ENCODE measurements at regions of chr5 and their contacts with region 1.

Region 1: GRCh38 chr5:128905571-128906110 is 59.6 kb upstream of the SLC27A6 start:
- DNase-seq: peak; percentile 67
- H3K4me3 ChIP-seq: no peak overlapping the region
- H3K27ac ChIP-seq: no peak overlapping the region
- H3K4me1 ChIP-seq: no peaks in the 10 kb centered on the region
- H3K27me3 ChIP-seq: peaks cover 4% of the 10 kb centered on the region
- CTCF ChIP-seq: peak; percentile 82

Region 2: DNA sequence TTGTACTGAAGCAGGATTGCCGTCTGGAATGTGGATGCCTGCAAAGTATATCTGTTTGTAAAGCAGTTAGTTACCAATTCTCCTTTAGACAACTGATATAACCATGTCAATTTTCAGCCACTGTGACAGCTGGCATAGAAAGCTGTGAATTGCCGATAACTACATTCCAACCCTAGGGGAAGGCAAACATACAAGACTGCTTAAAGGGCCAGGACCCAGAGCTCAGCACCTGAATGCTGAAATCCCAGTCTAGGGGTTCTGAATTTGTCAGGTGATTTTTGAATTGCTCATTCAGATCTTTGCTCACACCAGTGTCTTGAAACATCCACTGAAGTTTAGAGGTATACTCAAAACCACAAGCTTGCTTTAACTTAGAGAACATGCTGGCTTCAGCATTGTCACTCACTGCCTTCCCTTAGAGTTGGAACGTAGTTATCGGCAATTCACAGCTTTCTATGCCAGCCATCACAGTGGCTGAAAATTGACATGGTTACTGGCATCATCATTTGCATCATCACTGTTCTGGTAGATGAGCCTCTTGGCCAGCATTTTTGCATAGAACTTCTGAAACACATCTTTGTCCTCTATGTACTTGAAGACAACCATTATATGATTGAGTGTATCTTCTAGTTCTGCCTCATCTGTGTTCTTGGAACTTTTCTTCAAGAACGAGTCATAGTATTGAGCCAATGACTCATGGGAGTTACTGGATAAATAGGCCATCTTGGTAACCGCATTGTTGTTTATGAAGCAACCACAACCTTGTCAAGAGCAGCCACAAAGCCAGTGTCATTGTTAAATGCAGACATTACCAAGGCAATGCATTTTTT is 1120.3 kb before region 1 on chr5:
- CTCF ChIA-PET with region 1: no interaction called
- POLR2A ChIA-PET with region 1: no interaction called
- intact Hi-C with region 1: no loop called
- DNase-seq: no peak
- H3K4me3 ChIP-seq: no peak overlapping the region
- H3K27ac ChIP-seq: no peak overlapping the region
- H3K4me1 ChIP-seq: no peaks in the 10 kb centered on the region
- H3K27me3 ChIP-seq: no peaks in the 10 kb centered on the region
- CTCF ChIP-seq: no peak

Region 3: GRCh38 chr5:128962211-128962610 is 56.6 kb after region 1 on chr5:
- CTCF ChIA-PET with region 1: no interaction called
- POLR2A ChIA-PET with region 1: no interaction called
- intact Hi-C with region 1: no loop called
- DNase-seq: no peak
- H3K4me3 ChIP-seq: no peak overlapping the region
- H3K27ac ChIP-seq: no peak overlapping the region
- H3K4me1 ChIP-seq: no peaks in the 10 kb centered on the region
- H3K27me3 ChIP-seq: peaks cover 24% of the 10 kb centered on the region
- CTCF ChIP-seq: no peak

Region 4: DNA sequence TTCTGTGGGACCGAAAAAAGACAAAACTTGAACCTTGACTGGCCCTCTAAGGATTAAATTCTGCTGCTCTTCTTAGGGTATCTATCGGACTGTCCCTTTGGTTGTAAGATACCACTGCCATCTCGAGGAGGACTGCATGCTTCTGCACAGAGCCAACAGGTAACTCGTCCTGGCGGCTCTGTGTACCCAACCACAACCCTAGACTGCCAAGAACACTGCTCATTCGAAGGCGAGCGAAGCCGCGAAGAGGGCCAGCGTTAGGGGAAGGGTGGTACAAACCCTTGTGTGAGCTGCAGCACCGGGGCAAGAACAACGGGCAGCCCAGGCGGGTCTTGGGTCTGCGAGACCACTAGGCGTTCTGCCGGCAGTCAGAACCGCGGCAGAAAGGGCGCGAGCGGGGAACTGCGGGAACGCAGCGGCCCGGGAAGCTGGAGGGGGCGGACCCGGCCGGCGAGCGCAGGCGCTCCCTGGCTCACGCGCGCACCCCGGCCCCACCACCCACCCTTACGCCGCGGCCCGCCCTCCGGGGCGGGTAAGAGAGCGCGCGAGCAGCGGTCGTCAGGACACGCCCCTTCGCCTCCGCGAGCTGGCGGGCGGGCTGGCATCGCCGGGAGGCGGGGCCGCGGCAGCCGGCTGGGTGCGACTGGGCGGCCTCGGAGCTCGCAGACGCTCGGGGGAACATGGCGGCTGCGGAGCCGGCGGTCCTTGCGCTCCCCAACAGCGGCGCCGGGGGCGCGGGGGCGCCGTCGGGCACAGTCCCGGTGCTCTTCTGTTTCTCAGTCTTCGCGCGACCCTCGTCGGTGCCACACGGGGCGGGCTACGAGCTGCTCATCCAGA is 188.7 kb after region 1 on chr5 and contains the start of gene ISOC1:
- CTCF ChIA-PET with region 1: no interaction called
- POLR2A ChIA-PET with region 1: no interaction called
- intact Hi-C with region 1: no loop called
- DNase-seq: peak; percentile 95
- H3K4me3 ChIP-seq: peak within 1 kb of the TSS; percentile 69
- H3K27ac ChIP-seq: peak within 1 kb of the TSS; percentile 74
- H3K4me1 ChIP-seq: peaks cover 15% of the 10 kb centered on the region
- H3K27me3 ChIP-seq: peaks cover 5% of the 10 kb centered on the region
- CTCF ChIP-seq: no peak
- total RNA-seq, gene ISOC1: 18.3 and 21.1 TPM in 2 replicates

Region 5: GRCh38 chr5:129141696-129142095 is 236.1 kb after region 1 on chr5:
- CTCF ChIA-PET with region 1: no interaction called
- POLR2A ChIA-PET with region 1: no interaction called
- intact Hi-C with region 1: loop called (anchors 5 kb)
- DNase-seq: no peak
- H3K4me3 ChIP-seq: no peak overlapping the region
- H3K27ac ChIP-seq: no peak overlapping the region
- H3K4me1 ChIP-seq: no peaks in the 10 kb centered on the region
- H3K27me3 ChIP-seq: no peaks in the 10 kb centered on the region
- CTCF ChIP-seq: no peak